ENCODE measurements at regions of chr7 and their contacts with region 1.

Region 1: DNA sequence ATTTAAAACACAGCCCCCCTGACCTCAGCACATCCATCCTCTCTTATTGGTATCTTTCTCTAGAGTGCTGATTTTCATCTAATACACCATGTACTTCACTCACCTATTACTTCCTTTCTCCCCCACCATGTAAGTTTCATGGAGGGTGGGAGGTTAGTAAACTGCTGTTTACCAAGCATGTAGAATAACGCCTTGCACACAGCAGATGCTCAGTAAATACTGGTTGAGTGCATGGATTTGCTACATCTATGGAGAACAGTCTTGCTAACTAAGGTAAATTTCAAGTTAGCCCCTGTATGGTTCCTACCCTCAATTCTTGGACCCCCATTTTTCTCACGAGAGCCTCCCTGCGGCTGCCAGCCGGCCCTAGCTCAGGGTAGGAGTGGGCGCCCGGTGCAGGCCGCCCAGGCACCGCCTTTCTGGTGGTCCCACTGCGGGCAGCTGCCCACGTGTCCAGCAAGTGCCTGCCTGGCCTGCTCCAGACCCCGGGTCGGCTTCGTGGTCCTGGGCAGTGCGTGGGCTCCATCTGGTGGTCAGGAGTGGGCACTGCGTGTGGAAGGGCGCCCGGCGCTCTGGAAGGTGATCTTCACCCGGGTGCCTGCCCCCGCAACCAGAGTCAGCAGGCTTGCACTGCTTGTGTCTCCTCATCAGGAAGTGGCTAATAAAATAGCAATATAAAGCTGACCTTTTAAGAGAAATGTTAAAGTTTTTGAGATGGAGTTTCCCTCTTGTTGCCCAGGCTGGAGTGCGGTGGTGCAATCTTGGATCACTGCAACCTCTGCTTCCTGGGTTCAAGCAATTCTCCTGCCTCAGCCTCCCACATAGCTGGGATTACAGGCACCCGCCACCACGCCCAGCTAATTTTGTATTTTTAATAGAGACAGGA is 63.4 kb upstream of the DNAJB6 start:
- DNase-seq: peak; percentile 71 to 83 (median 82)
- H3K4me3 ChIP-seq: peak overlapping the region in 1 of 7 experiments; percentile 16
- H3K27ac ChIP-seq: no peak overlapping the region
- H3K4me1 ChIP-seq: peaks cover 0 to 46% (median 32%) of the 10 kb centered on the region in 4 experiments
- H3K27me3 ChIP-seq: no peaks in the 10 kb centered on the region

Region 2: DNA sequence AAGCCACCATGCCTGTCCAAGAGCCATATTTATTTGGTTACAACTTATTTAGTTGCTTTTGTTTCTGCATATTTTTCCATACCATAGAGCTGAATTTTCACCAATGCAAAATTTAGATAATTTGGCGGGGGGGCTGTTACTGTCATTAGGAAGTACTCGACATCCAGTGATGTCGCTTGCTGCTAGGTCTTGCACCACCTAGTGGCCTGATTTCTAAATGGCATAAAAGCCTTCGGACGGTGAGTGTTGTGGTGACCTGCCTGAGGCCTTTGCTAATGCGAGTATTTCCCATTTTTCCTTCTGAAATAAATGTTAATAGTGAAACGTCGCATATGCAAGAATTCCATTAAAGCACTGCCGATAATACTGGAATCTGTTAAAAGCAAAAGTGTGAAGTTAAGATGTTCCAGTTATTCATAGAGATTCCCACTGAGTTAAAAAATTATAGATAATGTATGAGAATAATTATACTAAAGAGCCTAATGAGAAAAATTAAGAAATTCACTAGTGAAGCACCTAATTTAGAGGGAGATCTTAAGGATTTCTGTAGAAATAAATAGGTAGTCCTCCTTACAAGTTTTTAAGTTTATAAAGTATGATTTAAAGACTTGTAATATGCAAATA is 22.7 kb before region 1 on chr7:
- CTCF ChIA-PET with region 1: interaction called, 17 read pairs
- POLR2A ChIA-PET with region 1: no interaction called
- DNase-seq: peak; percentile 69 to 80 (median 79)
- H3K4me3 ChIP-seq: no peak overlapping the region
- H3K27ac ChIP-seq: no peak overlapping the region
- H3K4me1 ChIP-seq: no peaks in the 10 kb centered on the region
- H3K27me3 ChIP-seq: no peaks in the 10 kb centered on the region

Region 3: DNA sequence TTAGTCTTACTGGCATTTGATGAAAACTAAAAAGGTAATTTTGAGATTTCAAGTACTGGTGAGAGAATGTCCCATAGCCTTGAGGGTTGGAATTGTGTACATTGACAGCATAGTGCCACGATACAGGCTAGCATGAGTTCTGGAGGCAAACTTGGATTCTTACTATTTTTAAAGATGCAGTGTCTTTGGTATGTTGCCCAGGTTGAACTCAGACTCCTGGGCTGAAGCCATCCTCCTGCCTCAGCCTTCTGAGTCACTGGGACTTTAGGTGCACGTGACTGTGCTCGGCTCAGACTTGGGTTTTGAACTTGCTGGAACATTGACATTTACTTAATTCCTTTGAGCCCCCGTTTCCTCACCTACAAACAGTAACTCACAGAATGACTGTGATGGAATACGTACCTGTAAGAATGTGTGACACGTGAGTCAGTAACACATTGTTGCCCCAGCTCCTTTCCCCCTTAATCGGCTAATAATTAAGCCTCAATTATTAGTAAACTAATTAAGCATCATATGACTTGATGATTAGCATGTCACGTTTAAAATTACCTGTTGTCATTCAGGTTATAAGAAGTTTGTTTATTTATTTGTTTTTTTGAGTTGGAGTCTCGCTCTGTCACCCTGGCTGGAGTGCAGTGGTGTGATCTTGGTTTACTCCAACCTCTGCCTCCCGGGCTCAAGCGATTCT is 73.9 kb after region 1 on chr7:
- CTCF ChIA-PET with region 1: interaction called, 14 read pairs
- POLR2A ChIA-PET with region 1: no interaction called
- DNase-seq: no peak
- H3K4me3 ChIP-seq: no peak overlapping the region
- H3K27ac ChIP-seq: no peak overlapping the region
- H3K4me1 ChIP-seq: peaks cover 0 to 35% (median 18%) of the 10 kb centered on the region in 4 experiments
- H3K27me3 ChIP-seq: no peaks in the 10 kb centered on the region

Region 4: GRCh38 chr7:157544980-157545680 is 271.7 kb after region 1 on chr7:
- CTCF ChIA-PET with region 1: no interaction called
- POLR2A ChIA-PET with region 1: no interaction called
- DNase-seq: no peak
- H3K4me3 ChIP-seq: no peak overlapping the region
- H3K27ac ChIP-seq: no peak overlapping the region
- H3K4me1 ChIP-seq: no peaks in the 10 kb centered on the region
- H3K27me3 ChIP-seq: no peaks in the 10 kb centered on the region

Measured in common myeloid progenitor, CD34-positive (primary cell).